MCF 10A (cell line): ENCODE measurements at regions of chr1 and their contacts with region 1.

Region 1: GRCh38 chr1:200979574-200980451 is 43.7 kb downstream of the KIF21B start:
- DNase-seq: peak; percentile 75
- H3K4me3 Mint-ChIP-seq: no peak overlapping the region
- H3K27ac Mint-ChIP-seq: no peak overlapping the region
- H3K4me1 Mint-ChIP-seq: no peaks in the 10 kb centered on the region
- H3K27me3 Mint-ChIP-seq: no peaks in the 10 kb centered on the region
- CTCF ChIP-seq: peak; percentile 96

Region 2: GRCh38 chr1:200794506-200795065 is 185.2 kb before region 1 on chr1:
- CTCF ChIA-PET with region 1: no interaction called
- POLR2A ChIA-PET with region 1: no interaction called
- intact Hi-C with region 1: no loop called
- DNase-seq: no peak
- H3K4me3 Mint-ChIP-seq: no peak overlapping the region
- H3K27ac Mint-ChIP-seq: peak overlapping the region; percentile 1
- H3K4me1 Mint-ChIP-seq: peaks cover 30% of the 10 kb centered on the region
- H3K27me3 Mint-ChIP-seq: no peaks in the 10 kb centered on the region
- CTCF ChIP-seq: no peak

Region 3: GRCh38 chr1:200992382-200993048 is 12.7 kb after region 1 on chr1:
- CTCF ChIA-PET with region 1: interaction called, 31 read pairs
- POLR2A ChIA-PET with region 1: no interaction called
- intact Hi-C with region 1: no loop called
- DNase-seq: no peak
- H3K4me3 Mint-ChIP-seq: no peak overlapping the region
- H3K27ac Mint-ChIP-seq: no peak overlapping the region
- H3K4me1 Mint-ChIP-seq: no peaks in the 10 kb centered on the region
- H3K27me3 Mint-ChIP-seq: no peaks in the 10 kb centered on the region
- CTCF ChIP-seq: no peak

Region 4: GRCh38 chr1:201016211-201016651 is 36.4 kb after region 1 on chr1:
- CTCF ChIA-PET with region 1: interaction called, 10 read pairs
- POLR2A ChIA-PET with region 1: no interaction called
- intact Hi-C with region 1: no loop called
- DNase-seq: peak; percentile 46
- H3K4me3 Mint-ChIP-seq: no peak overlapping the region
- H3K27ac Mint-ChIP-seq: no peak overlapping the region
- H3K4me1 Mint-ChIP-seq: peaks cover 32% of the 10 kb centered on the region
- H3K27me3 Mint-ChIP-seq: no peaks in the 10 kb centered on the region
- CTCF ChIP-seq: no peak

Region 5: GRCh38 chr1:201069636-201070035 is 89.8 kb after region 1 on chr1:
- CTCF ChIA-PET with region 1: interaction called, 10 read pairs
- POLR2A ChIA-PET with region 1: no interaction called
- intact Hi-C with region 1: no loop called
- DNase-seq: peak; percentile 26
- H3K4me3 Mint-ChIP-seq: no peak overlapping the region
- H3K27ac Mint-ChIP-seq: no peak overlapping the region
- H3K4me1 Mint-ChIP-seq: peaks cover 7% of the 10 kb centered on the region
- H3K27me3 Mint-ChIP-seq: peaks cover 49% of the 10 kb centered on the region
- CTCF ChIP-seq: no peak